ENCODE measurements at regions of chr6 and their contacts with region 1.

Region 1: DNA sequence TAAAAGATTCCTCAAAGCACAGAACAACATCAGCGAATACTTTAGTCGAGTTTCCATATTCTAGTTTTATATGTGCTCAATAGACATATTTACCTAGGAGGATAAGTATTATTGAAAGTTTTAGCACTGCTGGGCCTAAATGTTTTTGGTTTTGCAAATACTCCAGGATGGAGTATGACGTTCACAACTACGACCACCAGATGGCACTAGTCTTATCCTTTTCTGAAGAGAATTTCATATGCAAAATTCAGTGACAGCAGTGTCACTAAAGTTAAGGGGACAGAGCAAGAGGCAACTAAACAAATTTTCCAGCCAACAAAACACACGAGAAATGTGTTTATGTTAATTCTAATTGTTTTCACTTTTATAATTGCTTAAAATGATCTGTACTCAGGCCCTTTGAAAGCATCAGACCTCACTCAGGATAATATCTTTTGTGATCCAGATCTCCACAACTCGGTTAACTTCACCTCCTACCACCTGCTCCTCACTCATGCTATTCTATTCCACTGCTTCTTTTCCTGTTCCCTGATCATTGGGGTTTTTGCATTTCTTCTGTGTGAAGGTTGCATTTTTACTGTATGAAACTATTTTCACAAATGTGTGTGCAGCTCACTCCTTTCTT is 220.8 kb downstream of the TRDN start:
- DNase-seq: peak in 1 of 2 donors; percentile 36
- ATAC-seq: no peak

Region 2: DNA sequence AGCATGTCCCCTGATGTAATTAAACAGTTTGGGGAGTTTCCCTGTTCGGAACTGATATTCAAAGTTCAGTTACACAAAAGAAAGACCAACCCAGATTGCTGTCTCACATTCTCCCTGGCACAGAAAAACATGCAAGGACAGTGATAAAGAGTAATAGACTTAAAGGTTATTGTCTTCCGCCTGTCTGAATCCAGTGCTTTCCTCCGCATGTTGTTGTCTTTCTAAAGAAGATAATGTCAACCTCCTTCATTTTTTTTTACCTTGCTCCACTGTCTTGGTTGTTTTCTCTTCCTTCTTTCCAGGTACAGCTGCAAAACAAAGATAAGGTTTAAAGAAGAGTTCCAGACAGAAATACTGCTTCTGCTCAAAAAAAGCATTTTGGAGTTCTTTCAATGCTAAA is 63.7 kb before region 1 on chr6:
- intact Hi-C with region 1: no loop called
- DNase-seq: no peak
- ATAC-seq: no peak

Region 3: DNA sequence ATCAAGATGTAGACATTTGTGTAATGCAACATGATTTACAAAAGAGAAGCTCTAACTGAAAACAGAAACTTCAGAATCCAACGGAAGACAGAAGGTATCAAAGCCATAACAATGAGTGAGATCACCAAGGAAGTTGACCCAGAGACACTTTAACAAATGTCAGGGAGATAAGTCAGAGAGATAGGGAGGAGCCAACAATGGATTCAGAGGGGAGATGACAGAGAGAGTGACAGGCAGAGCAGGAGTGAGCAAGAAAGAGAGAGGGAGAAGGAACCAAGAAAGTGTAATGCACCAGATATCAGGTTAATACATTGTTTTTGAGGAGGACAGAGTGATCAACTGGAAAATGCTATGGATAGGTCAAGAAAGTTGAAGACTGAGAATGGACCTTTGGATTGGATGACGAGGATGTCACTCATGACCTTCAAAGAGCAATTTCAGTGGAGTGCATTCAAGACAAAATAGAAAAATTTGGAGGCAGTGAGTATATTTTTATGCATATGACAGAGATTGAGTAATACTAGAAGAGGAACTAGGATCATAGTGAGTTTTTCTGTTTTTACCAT is 134.2 kb after region 1 on chr6:
- intact Hi-C with region 1: no loop called
- DNase-seq: no peak
- ATAC-seq: no peak

Region 4: GRCh38 chr6:123715006-123715875 is 299.3 kb after region 1 on chr6:
- intact Hi-C with region 1: loop called in 1 of 2 experiments (anchors 5 kb)
- DNase-seq: no peak
- ATAC-seq: no peak